ENCODE measurements at regions of chr20 and their contacts with region 1.

Region 1: DNA sequence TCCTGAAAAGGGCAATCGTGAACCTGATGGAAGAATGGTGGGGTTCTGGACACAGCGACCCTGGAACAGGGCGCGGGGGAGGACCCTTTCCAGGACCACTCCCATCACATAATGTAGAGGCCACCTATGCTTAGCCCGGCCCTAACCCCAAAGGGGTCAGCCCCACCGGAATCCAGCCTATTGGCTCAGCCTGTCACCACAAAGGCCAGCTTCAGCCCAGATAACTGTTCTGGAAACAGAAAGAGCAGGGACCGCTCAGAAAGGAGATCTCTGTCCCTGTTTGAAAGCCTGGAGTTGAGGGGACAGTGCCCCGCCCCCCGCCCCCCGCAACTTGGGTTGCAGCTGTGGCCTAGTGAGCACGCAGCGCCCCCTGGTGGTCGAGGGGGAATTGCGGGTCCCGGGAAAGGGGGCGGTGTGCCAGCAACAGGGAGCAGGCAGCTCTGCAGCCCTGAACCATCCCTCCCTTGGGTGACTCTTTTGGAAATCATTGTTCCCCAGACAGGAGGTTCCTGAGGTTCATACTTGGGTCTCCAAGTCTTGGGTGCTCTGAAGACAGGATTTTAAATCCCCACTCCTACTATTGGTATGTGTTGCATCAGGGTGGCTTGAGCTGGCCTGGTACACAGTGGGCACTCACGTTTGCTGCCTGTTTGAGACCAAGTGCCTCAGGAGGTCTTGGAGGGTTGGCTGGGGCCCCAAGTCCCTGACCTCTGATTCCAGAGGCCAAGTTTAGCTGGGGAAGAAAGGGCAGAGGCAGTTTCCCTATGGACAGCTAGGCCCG is 1.5 kb downstream of the SIGLEC1 start:
- DNase-seq: peak; percentile 81
- H3K4me3 Mint-ChIP-seq: no peak overlapping the region
- H3K27ac Mint-ChIP-seq: no peak overlapping the region
- H3K4me1 Mint-ChIP-seq: no peaks in the 10 kb centered on the region
- H3K27me3 Mint-ChIP-seq: peaks cover 23% of the 10 kb centered on the region

Region 2: GRCh38 chr20:3563548-3564177 is 147.2 kb before region 1 on chr20:
- CTCF ChIA-PET with region 1: interaction called, 39 read pairs
- DNase-seq: no peak
- H3K4me3 Mint-ChIP-seq: no peak overlapping the region
- H3K27ac Mint-ChIP-seq: no peak overlapping the region
- H3K4me1 Mint-ChIP-seq: no peaks in the 10 kb centered on the region
- H3K27me3 Mint-ChIP-seq: no peaks in the 10 kb centered on the region

Region 3: DNA sequence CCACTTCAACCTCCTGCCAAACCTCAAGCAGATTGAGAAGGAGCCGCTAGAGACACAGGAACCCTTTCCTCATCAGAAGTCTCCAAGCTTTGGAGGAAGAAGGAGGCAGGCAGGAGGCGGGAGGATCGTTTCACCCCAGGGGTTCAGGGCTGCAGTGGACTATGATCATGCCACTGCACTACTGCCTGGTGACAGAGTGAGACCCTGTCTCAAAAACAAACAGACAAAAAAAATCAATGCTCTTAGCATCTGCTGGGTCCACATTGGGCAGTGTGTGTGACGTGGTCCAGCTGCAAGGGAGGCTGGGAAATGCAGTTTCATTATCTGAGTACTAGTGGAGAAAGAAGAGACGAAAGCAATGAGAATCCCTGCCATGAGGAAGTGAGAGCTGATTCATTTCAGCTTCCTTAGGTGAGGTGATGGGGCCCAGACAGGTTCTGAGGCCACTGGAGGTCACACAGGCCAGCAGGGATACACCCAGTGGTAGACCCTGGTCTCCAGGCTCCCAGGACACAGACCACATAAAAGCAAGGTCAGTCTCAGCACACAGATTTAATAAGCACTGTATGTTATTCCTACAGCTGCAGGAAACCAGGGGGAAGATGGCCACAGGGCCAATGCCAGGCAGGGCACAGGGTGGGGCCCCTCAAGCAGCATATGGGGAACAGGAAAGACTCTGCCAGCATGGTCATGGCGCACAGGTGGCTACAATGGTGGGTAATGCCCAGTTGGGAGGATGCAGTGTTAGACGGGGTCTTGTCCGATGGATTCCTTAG is 52.0 kb before region 1 on chr20:
- CTCF ChIA-PET with region 1: interaction called, 10 read pairs
- DNase-seq: no peak
- H3K4me3 Mint-ChIP-seq: no peak overlapping the region
- H3K27ac Mint-ChIP-seq: no peak overlapping the region
- H3K4me1 Mint-ChIP-seq: peaks cover 15% of the 10 kb centered on the region
- H3K27me3 Mint-ChIP-seq: peaks cover 88% of the 10 kb centered on the region

Region 4: DNA sequence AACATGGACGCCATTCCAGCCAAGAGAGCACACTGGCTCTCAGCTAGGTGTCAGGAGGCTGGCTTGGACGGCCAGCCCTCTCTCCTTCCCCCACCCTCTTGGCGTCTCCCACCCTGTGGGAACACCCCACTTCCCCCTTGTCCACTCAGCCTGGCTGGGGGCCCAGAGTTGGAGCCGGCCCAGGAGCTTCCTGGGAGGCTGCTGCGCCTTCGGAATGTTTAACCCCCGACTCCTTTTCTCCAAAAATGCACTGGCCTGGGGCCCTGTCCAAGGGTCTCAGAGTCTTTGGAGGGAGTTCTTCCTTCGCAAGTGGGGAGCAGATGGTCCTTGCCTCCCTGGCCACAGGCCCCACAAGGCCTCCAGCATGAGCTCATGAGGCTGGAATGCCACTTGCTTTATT is 33.2 kb before region 1 on chr20:
- CTCF ChIA-PET with region 1: interaction called, 35 read pairs
- DNase-seq: no peak
- H3K4me3 Mint-ChIP-seq: no peak overlapping the region
- H3K27ac Mint-ChIP-seq: no peak overlapping the region
- H3K4me1 Mint-ChIP-seq: peaks cover 9% of the 10 kb centered on the region
- H3K27me3 Mint-ChIP-seq: peaks cover 98% of the 10 kb centered on the region

Region 5: GRCh38 chr20:3696200-3696599 is 14.7 kb before region 1 on chr20:
- CTCF ChIA-PET with region 1: interaction called, 11 read pairs
- DNase-seq: no peak
- H3K4me3 Mint-ChIP-seq: no peak overlapping the region
- H3K27ac Mint-ChIP-seq: no peak overlapping the region
- H3K4me1 Mint-ChIP-seq: no peaks in the 10 kb centered on the region
- H3K27me3 Mint-ChIP-seq: peaks cover 11% of the 10 kb centered on the region

Measured in activated naive CD4-positive, alpha-beta T cell treated with anti-CD3 and anti-CD28 coated beads, Interleukin-2, amount 10 ng/mL, durations not matched to agents 7 days and 5 days (primary cell).